Heart left ventricle (tissue), 16 donors: ENCODE measurements at regions of chr19 and their contacts with region 1.

Region 1: GRCh38 chr19:19821366-19821951 is at the start of gene ZNF506:
- DNase-seq: peak; percentile 99 to 100 (median 99)
- ATAC-seq: peak; percentile 98 to 99 (median 98)
- H3K4me3 ChIP-seq: peak within 1 kb of the TSS; percentile 56 to 98 (median 74)
- H3K27ac ChIP-seq: peak within 1 kb of the TSS; percentile 89 to 98 (median 94)
- H3K4me1 ChIP-seq: peaks cover 0 to 41% (median 23%) of the 10 kb centered on the region in 12 donors
- H3K27me3 ChIP-seq: no peaks in the 10 kb centered on the region
- CTCF ChIP-seq: no peak
- POLR2A ChIP-seq: peak; percentile 30 to 85
- total RNA-seq, gene ZNF506: 9.0 to 20.2 (median 11.6) TPM

Region 2: GRCh38 chr19:19663256-19664038 is 158.0 kb before region 1 on chr19 and contains the start of gene ATP13A1:
- intact Hi-C with region 1: loop called in 1 of 10 experiments (anchors 1 kb)
- DNase-seq: peak; percentile 97 to 99 (median 99)
- ATAC-seq: peak; percentile 97 to 98 (median 98)
- H3K4me3 ChIP-seq: peak within 1 kb of the TSS; percentile 78 to 100 (median 96)
- H3K27ac ChIP-seq: peak within 1 kb of the TSS; percentile 83 to 99 (median 95)
- H3K4me1 ChIP-seq: peaks cover 0 to 37% (median 21%) of the 10 kb centered on the region in 12 donors
- H3K27me3 ChIP-seq: no peaks in the 10 kb centered on the region
- CTCF ChIP-seq: peak in 3 of 12 donors; percentile 8 to 34 (median 31)
- POLR2A ChIP-seq: peak in 1 of 2 donors; percentile 63
- total RNA-seq, gene ATP13A1: 15.7 to 65.8 (median 23.1) TPM

Region 3: DNA sequence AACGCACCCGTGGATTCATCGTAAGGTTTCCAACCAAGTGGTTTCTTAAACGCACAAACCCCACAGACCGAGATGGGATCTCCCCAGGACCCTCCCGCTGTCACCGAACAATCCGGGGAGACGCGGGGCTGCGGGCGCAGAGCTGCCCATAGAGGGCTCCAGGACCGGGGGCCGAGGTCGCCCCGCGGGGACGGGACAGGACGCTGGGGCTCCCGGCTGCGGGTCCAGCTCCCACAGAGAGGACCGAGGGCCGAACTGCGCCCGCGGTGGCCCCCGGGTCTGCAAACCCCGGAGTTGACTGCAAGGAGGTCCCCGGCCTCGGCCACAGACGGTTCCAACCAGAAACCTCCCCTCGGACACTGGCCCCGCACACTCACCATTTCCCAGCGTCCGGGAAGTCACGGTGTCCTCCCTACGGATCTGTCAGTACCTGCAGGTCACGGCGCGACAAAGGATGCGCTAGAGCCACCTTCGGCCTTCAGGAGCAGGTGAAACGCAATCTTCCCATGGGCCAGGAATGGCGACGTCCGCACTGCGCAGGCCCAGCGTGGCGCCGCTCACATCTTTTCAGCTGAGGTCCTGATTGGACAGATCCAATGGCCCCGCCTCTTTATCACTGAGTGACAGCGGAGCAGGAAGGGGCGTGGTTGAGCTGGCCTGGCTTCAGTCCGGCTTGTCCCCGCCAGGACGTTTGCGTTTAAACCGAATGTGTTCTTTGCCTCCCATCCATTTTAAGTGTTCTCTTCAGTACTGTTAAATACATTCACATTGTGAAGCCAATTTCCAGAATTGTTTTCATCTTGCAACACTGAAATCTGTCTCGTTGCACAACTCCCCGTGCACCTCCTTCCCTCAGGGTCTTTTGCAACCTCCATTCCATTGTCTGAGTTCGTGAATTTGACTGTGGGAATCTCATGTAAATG is 88.6 kb before region 1 on chr19 and contains the start of gene ZNF14:
- intact Hi-C with region 1: loop called in 1 of 10 experiments (anchors 1 kb)
- DNase-seq: peak; percentile 93 to 96 (median 95)
- ATAC-seq: peak; percentile 100
- H3K4me3 ChIP-seq: peak within 1 kb of the TSS; percentile 63 to 96 (median 84)
- H3K27ac ChIP-seq: peak within 1 kb of the TSS in 11 of 12 donors; percentile 58 to 83 (median 76)
- H3K4me1 ChIP-seq: peaks cover 0 to 13% (median 8%) of the 10 kb centered on the region in 12 donors
- H3K27me3 ChIP-seq: no peaks in the 10 kb centered on the region
- CTCF ChIP-seq: peak in 7 of 12 donors; percentile 5 to 40 (median 17)
- POLR2A ChIP-seq: peak in 1 of 2 donors; percentile 85
- total RNA-seq, gene ZNF14: 2.9 to 7.9 (median 3.6) TPM

Region 4: DNA sequence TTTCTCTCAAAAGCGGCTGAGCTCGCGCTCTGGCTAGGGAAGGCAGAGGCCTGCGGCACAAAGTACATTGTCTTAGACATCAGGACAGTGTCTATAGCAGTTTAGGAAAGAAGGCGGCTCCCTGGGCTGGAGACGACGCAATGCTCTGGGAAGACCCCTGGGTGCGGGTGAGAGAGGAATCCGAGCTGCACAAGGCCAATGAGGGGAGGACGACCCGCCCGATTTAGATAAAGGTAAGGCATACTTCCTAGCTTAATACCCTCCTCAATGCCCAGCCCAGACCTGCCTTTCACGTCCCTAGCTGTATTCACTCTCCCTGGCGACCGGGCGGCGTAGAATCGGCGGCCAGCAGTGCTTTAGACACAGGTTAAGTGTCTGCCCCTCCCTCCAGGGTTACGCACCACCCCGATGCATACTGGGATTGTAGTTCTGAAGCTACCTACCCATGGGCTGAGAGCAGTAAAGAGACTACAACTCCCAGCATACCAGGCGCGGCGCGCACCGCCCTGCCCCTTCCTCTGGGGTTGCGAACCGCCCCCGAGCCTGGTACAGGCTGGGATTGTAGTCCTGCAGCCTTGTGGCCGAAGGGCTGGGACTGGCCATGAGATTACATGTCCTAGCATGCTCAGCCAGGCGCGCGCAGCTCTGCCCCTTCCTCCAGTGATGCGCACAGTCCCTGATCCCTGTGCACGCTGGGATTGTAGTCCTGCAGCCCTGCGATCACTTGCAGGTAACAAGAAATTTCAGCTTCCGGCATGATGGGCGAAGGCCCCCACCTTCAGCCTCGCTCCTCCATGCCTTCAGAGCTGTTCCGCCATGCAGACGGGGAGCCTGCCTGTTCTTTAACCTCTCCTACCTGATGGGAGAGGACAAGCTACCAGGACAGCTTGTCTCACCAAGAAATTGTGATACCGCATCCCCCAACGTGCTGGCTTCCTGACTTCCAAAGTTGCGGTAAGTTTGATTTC is 45.1 kb before region 1 on chr19:
- intact Hi-C with region 1: loop called in 1 of 10 experiments (anchors 5 kb)
- DNase-seq: peak; percentile 97 to 99 (median 98)
- ATAC-seq: peak; percentile 100
- H3K4me3 ChIP-seq: peak overlapping the region; percentile 45 to 90 (median 81)
- H3K27ac ChIP-seq: peak overlapping the region in 11 of 12 donors; percentile 43 to 84 (median 70)
- H3K4me1 ChIP-seq: peaks cover 0 to 30% (median 15%) of the 10 kb centered on the region in 12 donors
- H3K27me3 ChIP-seq: no peaks in the 10 kb centered on the region
- CTCF ChIP-seq: peak in 2 of 12 donors; percentile 16 to 24
- POLR2A ChIP-seq: peak in 1 of 2 donors; percentile 64

Region 5: GRCh38 chr19:19860756-19861390 is 39.4 kb after region 1 on chr19:
- intact Hi-C with region 1: loop called in 5 of 10 experiments (anchors 2 to 5 kb)
- DNase-seq: no peak
- ATAC-seq: no peak
- H3K4me3 ChIP-seq: peak overlapping the region in 5 of 12 donors; percentile 10 to 36 (median 25)
- H3K27ac ChIP-seq: no peak overlapping the region
- H3K4me1 ChIP-seq: peaks cover 0 to 6% (median 0%) of the 10 kb centered on the region in 12 donors
- H3K27me3 ChIP-seq: peaks cover 0 to 11% (median 0%) of the 10 kb centered on the region in 9 donors
- CTCF ChIP-seq: no peak
- POLR2A ChIP-seq: no peak

Region 6: GRCh38 chr19:19865739-19866481 is 44.5 kb after region 1 on chr19 and contains the start of gene ZNF253:
- intact Hi-C with region 1: loop called in 5 of 10 experiments (anchors 2 to 5 kb)
- DNase-seq: peak; percentile 97 to 99 (median 98)
- ATAC-seq: peak; percentile 99 to 100 (median 99)
- H3K4me3 ChIP-seq: peak within 1 kb of the TSS; percentile 53 to 93 (median 84)
- H3K27ac ChIP-seq: peak within 1 kb of the TSS; percentile 80 to 97 (median 94)
- H3K4me1 ChIP-seq: peaks cover 0 to 42% (median 25%) of the 10 kb centered on the region in 12 donors
- H3K27me3 ChIP-seq: peaks cover 0 to 3% (median 0%) of the 10 kb centered on the region in 9 donors
- CTCF ChIP-seq: no peak
- POLR2A ChIP-seq: peak; percentile 74 to 95
- total RNA-seq, gene ZNF253: 5.6 to 16.6 (median 8.1) TPM